Vagina (tissue), 2 donors: ENCODE measurements at regions of chr10 and their contacts with region 1.

Region 1: DNA sequence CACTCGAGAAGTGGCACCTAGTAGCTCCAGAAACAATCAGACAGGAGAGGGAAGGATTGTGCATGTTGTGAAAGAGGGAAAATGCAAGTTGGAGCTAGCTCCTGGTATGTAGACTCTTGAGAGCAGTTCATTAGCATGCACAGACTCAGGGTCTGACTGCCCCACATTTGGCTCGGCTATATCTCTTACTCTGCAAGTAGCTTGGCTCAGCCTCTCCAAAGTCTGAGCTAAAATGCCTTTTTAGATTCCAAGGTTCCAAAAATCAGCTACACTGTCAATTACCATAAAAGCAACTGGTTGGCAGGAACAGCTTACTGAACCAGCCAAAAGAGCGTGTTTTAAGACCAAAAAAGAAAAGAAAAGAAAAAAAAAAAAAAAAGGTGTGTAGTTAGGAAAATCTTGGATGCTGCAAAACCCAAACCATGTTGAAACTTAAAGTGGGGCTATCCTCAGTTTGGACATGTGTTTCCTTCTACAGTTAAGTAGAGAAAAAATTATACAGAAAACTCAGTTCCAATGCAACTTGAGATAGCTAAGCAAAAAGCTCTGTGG is 65.5 kb downstream of the MKX start:
- DNase-seq: no peak
- H3K4me3 ChIP-seq: no peak overlapping the region
- H3K27ac ChIP-seq: no peak overlapping the region
- H3K4me1 ChIP-seq: peaks cover 8% of the 10 kb centered on the region
- H3K27me3 ChIP-seq: no peaks in the 10 kb centered on the region
- CTCF ChIP-seq: no peak
- POLR2A ChIP-seq: no peak

Region 2: GRCh38 chr10:27448921-27449320 is 231.2 kb before region 1 on chr10:
- intact Hi-C with region 1: loop called (anchors 2 kb)
- DNase-seq: no peak
- H3K4me3 ChIP-seq: no peak overlapping the region
- H3K27ac ChIP-seq: no peak overlapping the region
- H3K4me1 ChIP-seq: no peaks in the 10 kb centered on the region
- H3K27me3 ChIP-seq: no peaks in the 10 kb centered on the region
- CTCF ChIP-seq: no peak
- POLR2A ChIP-seq: no peak